ENCODE measurements at regions of chr15 and their contacts with region 1.

Region 1: DNA sequence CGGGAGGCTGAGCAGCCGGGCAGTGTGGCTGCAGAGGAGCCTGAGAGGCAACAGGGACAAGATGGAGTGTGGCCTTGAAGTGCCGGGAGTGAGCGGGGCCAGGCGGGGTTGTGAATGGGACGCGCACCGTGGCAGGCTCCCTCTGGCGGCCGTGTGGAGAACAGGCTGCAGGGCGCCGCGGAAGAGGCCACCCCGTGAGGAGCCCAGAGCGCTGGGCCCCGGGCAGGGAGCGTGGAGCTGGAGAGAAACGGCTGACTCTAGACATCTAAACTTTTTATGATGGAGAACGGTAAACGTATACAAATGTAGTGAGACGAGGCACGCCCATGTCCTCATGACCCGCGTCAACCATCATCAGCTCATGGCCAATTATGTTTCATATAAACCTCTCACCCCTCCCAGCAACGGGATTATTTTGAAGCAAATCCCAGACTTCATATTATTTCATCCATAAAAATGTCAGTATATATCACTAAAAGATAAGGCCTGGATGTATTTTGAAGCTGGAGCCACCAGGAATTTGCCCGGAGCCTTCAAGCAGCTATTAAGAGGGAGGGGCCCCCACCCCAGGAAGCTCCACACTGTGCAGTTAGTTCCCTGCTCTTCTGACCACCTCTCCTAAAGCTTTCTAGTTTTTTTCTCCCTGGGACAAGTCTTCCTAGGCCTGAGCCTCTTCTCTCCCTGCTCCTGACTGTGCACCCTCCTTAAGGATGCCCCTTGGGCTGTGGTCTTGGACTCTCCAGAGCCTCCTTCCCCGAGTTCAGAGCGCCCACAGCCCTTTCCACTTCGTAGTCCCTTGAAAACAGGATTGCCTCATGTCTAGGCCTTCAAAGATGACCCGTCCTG is 149.4 kb downstream of the SMAD6 start:
- DNase-seq: peak; percentile 86
- H3K27ac ChIP-seq: peak overlapping the region; percentile 7
- CTCF ChIP-seq: peak; percentile 100

Region 2: GRCh38 chr15:66619151-66619903 is 232.1 kb before region 1 on chr15:
- CTCF ChIA-PET with region 1: interaction called, 12 read pairs
- POLR2A ChIA-PET with region 1: no interaction called
- DNase-seq: peak; percentile 77
- H3K27ac ChIP-seq: no peak overlapping the region
- CTCF ChIP-seq: peak; percentile 97

Region 3: DNA sequence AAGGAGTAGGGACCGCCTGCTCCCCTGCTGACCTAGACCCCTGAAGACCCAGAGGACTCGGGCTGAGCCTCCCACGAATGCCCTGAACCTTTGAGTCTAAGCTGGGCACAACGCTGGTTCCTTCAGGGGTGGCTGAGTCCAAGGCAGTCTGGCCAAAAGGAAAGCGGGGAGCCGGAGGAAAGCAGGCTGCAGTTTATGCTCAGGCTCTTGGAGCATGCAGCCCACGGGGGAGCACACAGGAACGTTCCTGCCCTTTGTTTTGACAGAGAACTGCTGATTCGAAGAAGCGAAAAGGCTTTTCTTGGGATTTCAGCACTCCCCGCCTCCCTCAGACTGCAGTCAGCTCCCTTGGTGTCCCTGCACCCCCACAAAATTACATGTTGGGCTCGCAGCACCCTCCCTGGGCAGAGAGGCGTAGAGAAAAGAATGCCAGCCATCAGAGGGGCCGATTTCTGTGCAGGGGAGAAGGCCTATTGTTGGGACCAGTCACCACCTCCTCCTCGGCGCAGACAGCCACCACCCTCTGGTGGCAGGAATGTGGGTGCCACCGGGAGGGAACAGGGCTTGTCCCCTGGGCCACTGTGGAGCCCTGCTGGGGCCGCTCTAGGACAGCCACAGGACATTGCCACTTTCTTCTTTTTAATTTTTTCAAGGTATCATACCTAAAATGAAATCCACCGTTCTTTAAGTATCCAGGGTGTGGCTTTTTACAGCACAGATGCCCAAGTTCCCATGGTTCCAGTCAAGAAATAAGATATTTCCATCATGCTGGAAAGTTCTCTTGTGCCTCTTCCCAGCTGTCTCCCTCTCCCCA is 77.2 kb before region 1 on chr15:
- CTCF ChIA-PET with region 1: interaction called, 31 read pairs
- POLR2A ChIA-PET with region 1: no interaction called
- DNase-seq: peak; percentile 88
- H3K27ac ChIP-seq: peak overlapping the region; percentile 12; the same call in 1 of the 2 replicates
- CTCF ChIP-seq: peak; percentile 98

Region 4: DNA sequence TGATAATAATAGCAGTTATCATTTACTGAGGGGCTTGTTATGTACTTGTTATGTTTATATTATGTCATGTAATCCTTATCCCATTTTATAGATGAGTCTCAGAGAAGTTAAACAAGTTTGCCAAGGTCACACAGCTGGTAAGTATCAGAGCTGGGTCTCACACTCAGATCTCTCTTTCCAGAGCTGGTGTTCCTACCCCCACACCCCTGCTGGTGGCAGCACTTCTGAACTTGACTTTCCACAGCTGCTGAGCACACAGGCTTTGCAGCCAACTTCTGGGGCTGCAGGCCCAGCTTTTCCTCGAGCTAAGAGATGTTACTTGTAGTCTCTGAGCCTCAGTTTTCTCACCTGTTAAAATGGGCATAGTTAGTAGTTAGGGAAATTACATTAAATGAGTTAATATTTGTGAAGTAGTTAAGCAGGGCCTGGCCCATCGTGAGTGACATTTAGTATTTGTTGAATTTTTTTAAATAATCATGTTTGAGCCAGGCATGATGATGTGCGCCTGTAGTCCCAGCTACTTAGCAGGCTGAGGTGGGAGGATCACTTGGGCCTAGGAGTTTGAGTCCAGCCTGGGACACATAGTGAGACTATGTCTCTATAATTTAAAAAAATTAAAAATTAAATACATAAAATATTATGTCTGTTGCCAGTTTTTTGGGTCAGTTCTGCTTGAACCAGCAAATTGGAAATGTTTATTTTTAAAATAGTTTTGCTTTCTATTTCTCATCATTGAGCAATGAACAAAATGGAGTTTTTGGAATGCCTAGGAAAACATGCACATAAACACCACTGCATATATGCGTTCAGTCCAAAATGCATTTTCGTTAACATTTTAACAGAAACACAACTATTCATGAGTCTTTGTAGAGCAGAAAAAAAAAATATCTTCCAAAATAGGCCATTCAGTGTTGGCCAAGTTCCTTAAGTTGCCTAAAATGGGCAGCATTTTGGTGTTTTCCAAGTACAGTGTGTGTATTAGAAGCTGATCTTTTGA is 62.1 kb before region 1 on chr15:
- CTCF ChIA-PET with region 1: interaction called, 27 read pairs
- POLR2A ChIA-PET with region 1: no interaction called
- DNase-seq: no peak
- H3K27ac ChIP-seq: no peak overlapping the region
- CTCF ChIP-seq: peak; percentile 50

Region 5: DNA sequence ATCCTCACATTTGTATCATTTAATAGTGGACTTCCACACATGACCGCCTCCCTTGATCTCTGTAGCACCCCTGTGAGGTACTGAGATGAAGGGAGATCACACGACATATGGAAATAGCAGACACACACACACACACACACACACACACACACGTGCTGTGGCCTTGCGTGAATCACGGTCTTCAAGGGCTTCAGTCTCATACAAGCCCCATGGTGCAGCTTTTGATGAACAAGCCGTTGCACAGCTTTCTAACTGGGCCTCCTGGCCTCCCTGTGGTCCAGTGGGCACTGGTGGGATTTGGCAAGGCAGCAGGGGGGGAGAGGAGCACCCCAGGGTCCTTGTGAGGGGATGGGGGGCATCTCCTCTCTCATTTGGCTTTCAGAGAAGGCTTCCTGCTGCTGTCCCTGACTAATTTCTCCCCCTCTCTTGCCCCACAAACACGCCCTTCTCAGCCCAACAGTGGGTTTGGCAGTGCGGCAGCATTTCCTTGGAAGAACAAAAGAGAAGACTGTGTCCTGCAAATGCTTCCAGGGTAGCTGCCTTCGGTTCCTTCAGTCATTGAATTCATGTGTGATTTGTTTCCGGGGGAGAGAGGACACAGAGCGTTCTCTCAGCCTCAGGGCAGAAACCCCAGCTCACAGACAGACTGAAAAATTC is 50.7 kb before region 1 on chr15:
- CTCF ChIA-PET with region 1: no interaction called
- POLR2A ChIA-PET with region 1: no interaction called
- DNase-seq: no peak
- H3K27ac ChIP-seq: 0 out of 2 replicates have a peak overlapping the region, but pooled peaks have one; percentile 9
- CTCF ChIP-seq: no peak

Region 6: DNA sequence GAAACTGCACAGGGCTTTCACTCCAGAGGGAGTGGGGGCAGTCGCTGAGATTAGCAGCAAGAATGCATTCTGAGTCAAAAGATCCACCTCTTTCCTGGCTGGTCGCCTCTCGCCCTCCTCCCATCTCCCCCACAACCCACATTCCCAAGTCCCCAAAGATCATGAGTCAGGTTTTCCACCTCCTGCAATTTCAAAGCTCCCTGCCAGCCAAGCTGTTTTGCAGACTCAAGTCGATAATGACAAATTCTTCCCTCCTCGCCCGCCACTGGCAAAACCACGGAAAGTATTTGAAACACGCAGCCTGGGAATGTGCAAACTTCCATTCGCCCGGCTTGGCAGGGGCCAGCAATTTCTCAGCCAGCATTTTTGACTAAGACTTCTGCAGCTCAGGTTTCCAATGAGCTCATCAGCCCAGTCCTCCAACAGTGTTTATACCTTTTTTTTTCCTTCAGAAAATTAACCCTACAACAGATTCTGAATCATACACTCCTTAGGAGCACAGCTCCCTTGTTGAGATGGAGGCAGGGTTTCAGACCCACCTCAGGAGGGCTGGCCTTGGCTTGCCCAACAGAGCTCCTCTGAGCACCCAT is 32.0 kb after region 1 on chr15:
- CTCF ChIA-PET with region 1: no interaction called
- POLR2A ChIA-PET with region 1: no interaction called
- DNase-seq: peak; percentile 97
- H3K27ac ChIP-seq: peak overlapping the region; percentile 93
- CTCF ChIP-seq: no peak

Region 7: GRCh38 chr15:66966257-66966656 is 114.8 kb after region 1 on chr15:
- CTCF ChIA-PET with region 1: no interaction called
- POLR2A ChIA-PET with region 1: no interaction called
- DNase-seq: no peak
- H3K27ac ChIP-seq: no peak overlapping the region
- CTCF ChIP-seq: no peak